ENCODE measurements at regions of chr20 and their contacts with region 1.

Region 1: DNA sequence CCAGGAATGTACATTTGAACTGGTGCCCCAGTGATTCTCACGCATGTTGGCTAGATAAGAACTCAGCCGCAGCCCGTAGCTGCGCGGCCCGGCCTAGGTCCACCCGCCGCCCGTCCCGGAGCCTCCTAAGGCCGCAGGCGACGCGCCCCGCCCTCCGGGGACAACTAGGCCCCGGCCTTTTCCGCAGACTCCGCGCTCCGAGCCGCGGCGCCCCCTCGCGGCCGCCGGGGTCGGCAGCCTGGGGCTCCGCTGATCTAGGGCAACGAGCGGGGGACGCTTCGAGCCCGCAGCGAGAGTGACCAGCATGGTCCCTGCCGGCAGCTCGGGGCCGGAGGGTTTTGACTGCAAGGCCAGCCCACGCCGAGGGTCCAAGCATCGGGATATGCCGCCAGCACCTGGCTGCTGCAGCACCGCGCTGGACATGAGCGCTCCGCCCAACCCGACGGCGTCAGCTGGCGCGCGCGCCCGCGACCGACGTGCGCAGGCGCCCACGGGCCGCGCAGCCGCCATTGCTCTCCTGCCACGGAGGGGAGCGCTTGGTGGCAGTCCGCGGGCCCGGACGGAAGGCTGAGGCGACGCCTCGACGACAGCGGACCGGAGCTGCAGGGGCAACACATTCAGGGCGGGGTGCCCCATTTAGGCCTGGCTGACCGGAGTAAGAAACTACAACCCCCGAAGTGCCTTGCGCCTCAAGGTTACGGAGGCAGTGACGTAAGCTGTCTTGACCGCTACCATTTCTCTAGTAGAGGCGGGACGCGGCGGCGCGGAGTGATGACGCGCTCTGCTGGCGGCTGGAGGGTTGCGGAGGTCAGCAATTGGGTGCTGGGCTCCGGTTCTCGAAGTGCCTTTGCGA is at the start of gene AP5S1:
- DNase-seq: peak; percentile 96
- H3K4me3 ChIP-seq: peak within 1 kb of the TSS; percentile 74 to 84 (median 77)
- H3K27ac ChIP-seq: peak within 1 kb of the TSS; percentile 96 to 98
- H3K4me1 ChIP-seq: peaks cover 0 to 4% of the 10 kb centered on the region in 2 donors
- H3K27me3 ChIP-seq: no peaks in the 10 kb centered on the region
- CTCF ChIP-seq: peak; percentile 94 to 100 (median 99)
- POLR2A ChIP-seq: peak; percentile 62
- total RNA-seq, gene AP5S1: 11.1 to 13.8 (median 11.8) TPM

Region 2: DNA sequence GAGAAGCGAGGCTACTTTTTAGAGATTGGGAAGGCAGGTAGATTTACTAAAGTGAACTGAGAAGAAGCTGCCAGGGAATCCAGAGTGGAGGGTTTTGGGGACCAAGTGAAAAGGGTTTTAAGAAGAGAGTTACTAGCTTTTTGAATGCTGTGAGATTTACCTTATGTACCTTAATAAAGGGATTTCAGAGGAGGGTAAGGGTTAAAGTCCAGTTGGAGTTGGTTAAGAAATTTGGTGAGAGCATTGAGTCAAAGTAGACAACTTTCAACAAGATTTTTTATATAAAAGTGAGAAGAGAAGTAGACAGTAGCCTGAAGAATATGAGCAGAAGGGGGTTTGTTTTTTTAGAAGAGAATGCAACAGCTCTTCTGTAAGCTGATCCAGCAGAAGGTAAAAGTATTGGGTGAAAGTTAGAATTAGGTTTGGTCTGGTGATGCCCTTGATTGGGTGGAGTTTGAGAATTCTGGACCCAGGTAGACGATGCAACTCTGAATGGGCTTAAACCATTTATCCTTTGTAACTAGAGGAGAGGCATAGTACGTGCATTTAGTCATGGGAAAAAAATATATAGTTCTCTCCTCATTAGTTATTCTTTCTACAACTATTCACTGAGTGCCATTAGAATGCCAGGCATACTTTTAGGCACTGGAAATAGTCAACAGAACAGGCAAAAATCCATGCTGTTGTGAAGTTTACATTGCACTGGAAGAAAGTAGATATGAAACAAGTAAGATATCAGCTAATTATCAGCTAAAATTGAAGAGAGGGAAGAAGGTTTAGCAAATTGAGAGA is 304.7 kb before region 1 on chr20:
- intact Hi-C with region 1: no loop called
- DNase-seq: no peak
- H3K4me3 ChIP-seq: no peak overlapping the region
- H3K27ac ChIP-seq: no peak overlapping the region
- H3K4me1 ChIP-seq: no peaks in the 10 kb centered on the region
- H3K27me3 ChIP-seq: no peaks in the 10 kb centered on the region
- CTCF ChIP-seq: no peak
- POLR2A ChIP-seq: no peak

Region 3: GRCh38 chr20:3785399-3786125 is 34.7 kb before region 1 on chr20:
- intact Hi-C with region 1: loop called (anchors 2 kb)
- DNase-seq: no peak
- H3K4me3 ChIP-seq: peak overlapping the region; percentile 48 to 80 (median 67)
- H3K27ac ChIP-seq: peak overlapping the region; percentile 72 to 82
- H3K4me1 ChIP-seq: peaks cover 31 to 36% of the 10 kb centered on the region in 2 donors
- H3K27me3 ChIP-seq: no peaks in the 10 kb centered on the region
- CTCF ChIP-seq: no peak
- POLR2A ChIP-seq: no peak

Region 4: DNA sequence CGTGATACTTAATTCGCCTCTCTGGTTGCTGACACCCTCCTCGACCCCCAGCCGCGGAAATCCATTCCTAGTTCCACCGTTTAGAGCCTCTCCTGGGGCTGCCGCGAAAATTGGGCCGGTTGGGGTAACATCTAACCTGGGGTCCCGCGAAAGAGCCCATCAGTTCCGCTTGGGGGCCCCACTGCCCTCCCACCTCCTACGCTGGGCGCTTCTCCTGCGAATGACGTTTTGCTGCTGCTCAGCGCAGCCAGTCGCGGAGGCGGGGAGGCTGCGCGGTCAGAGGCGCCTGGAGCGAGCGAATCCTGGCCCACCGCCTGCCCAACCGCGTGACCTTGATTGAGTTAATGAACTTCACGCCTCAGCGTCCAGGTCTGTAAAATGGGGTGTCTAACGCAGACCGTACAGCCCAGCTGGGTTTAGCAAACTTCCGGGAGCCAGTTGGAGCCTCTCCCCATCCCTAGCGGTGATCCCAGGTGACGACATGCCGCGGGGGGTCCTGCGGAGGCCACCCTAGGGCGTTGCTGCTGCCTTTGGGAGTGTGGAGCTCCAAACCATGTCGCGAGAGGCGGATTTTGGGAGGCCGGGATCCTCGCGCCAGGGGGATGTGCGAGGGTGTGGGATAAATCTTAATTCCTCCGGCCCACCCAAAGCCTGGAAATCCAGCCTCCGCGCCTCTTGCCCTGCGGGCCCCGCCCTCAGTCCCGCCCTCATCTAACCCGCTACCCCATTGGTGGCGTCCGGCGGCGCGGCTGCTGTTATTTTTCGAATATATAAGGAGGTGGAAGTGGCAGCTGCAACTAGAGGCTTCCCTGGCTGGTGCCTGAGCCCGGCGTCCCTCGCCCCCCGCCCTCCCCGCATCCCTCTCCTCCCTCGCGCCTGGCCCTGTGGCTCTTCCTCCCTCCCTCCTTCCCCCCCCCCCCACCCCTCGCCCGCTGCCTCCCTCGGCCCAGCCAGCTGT is 24.5 kb before region 1 on chr20 and contains the start of gene CDC25B:
- intact Hi-C with region 1: no loop called
- DNase-seq: peak; percentile 91 to 95
- H3K4me3 ChIP-seq: peak within 1 kb of the TSS; percentile 59 to 93 (median 69)
- H3K27ac ChIP-seq: peak within 1 kb of the TSS; percentile 97 to 100
- H3K4me1 ChIP-seq: peaks cover 0 to 8% of the 10 kb centered on the region in 2 donors
- H3K27me3 ChIP-seq: no peaks in the 10 kb centered on the region
- CTCF ChIP-seq: peak; percentile 74 to 83 (median 75)
- POLR2A ChIP-seq: peak; percentile 15
- total RNA-seq, gene CDC25B: 18.1 to 25.0 (median 22.0) TPM